ENCODE measurements at regions of chr2 and their contacts with region 1.

Region 1: GRCh38 chr2:136423516-136423996 is 305.6 kb upstream of the CXCR4 start:
- DNase-seq: peak; percentile 73
- H3K4me3 ChIP-seq: peak overlapping the region; percentile 25
- H3K27ac ChIP-seq: no peak overlapping the region
- H3K4me1 ChIP-seq: no peaks in the 10 kb centered on the region
- H3K27me3 ChIP-seq: peaks cover 61% of the 10 kb centered on the region
- CTCF ChIP-seq: peak; percentile 87

Region 2: DNA sequence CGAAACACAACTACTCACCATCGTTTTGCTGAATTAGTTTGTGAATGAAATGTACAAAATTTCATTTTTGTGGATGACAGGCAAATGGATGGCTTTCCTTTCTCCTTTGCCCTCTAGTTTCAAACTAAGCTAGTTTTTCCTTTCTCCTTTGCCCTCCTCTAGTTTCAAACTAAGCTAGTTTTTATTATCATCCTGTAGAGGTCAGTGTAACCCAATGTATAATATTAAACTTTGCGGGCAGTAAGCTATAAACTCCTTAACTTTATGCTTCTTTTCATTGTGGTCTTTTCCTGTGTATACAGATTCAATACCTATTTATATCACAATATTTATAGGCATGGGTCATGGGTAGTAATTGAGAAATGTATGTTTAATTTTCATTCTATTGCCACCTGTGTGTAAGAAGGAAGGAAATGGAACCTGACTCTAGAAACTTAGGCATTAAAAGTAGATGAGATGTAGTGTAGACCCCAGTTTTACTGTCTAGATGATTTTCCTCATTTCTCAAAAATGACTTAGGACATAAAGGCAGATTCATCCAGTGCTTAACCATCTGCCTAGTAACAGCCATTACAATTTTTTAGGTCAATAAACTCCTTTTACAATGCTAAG is 1434.5 kb before region 1 on chr2:
- CTCF ChIA-PET with region 1: no interaction called
- POLR2A ChIA-PET with region 1: no interaction called
- intact Hi-C with region 1: no loop called
- DNase-seq: peak; percentile 49
- H3K4me3 ChIP-seq: no peak overlapping the region
- H3K27ac ChIP-seq: no peak overlapping the region
- H3K4me1 ChIP-seq: no peaks in the 10 kb centered on the region
- H3K27me3 ChIP-seq: peaks cover 17% of the 10 kb centered on the region
- CTCF ChIP-seq: peak; percentile 61

Region 3: DNA sequence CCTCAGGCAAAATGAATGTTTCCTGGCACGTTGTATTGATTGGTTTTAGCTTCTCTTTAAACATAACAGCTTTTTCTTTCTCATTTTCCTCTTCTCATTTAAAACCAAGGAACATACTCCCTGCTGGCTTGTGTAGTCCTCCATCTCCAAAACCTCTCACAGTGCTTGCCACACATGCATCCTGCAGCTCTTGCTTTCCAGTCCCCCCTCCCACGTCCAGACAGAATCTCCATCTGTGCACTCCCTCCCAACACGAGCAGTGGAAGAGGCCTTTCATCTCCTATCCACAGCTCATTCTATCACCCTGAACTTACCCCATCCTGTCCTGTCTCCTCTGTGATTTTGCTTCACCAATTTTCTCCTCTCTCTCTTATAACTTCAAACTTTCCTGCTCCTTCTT is 242.2 kb after region 1 on chr2:
- CTCF ChIA-PET with region 1: no interaction called
- POLR2A ChIA-PET with region 1: no interaction called
- intact Hi-C with region 1: loop called (anchors 10 kb)
- DNase-seq: no peak
- H3K4me3 ChIP-seq: no peak overlapping the region
- H3K27ac ChIP-seq: no peak overlapping the region
- H3K4me1 ChIP-seq: no peaks in the 10 kb centered on the region
- H3K27me3 ChIP-seq: no peaks in the 10 kb centered on the region
- CTCF ChIP-seq: no peak

Region 4: DNA sequence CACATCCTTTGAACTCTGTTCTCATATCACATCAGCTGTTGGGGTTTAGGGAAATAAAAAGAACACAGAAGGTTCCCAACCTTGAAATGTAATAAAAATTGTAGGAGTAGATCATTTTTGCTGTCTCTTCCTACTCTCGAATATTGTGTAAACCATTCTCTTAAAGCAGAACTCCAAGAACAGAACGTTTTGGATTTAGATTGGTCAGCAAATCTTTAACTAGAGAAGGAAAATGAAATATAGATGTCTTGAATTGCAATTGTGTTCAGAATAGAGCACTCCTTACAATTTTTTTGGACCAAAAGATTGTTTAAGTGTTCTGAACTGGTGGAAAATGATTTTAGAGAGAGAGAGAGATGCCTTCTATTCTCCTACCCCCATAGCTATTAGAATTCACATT is 317.9 kb after region 1 on chr2:
- CTCF ChIA-PET with region 1: no interaction called
- POLR2A ChIA-PET with region 1: no interaction called
- intact Hi-C with region 1: loop called (anchors 5 kb)
- DNase-seq: no peak
- H3K4me3 ChIP-seq: no peak overlapping the region
- H3K27ac ChIP-seq: no peak overlapping the region
- H3K4me1 ChIP-seq: no peaks in the 10 kb centered on the region
- H3K27me3 ChIP-seq: no peaks in the 10 kb centered on the region
- CTCF ChIP-seq: no peak

Measured in A673 (cell line).